ENCODE measurements at regions of chr2 and their contacts with region 1.

Region 1: GRCh38 chr2:54838585-54839035 is 115.1 kb downstream of the EML6 start:
- DNase-seq: peak in 34 of 35 experiments; percentile 4 to 81 (median 46)
- ATAC-seq: peak; percentile 71 to 84 (median 76)
- H3K4me3 ChIP-seq: no peak overlapping the region
- H3K4me3 Mint-ChIP-seq: no peak overlapping the region
- H3K27ac ChIP-seq: no peak overlapping the region
- H3K27ac Mint-ChIP-seq: no peak overlapping the region
- H3K4me1 ChIP-seq: no peaks in the 10 kb centered on the region
- H3K4me1 Mint-ChIP-seq: no peaks in the 10 kb centered on the region
- H3K27me3 ChIP-seq: no peaks in the 10 kb centered on the region
- H3K27me3 Mint-ChIP-seq: no peaks in the 10 kb centered on the region

Region 2: GRCh38 chr2:54106631-54107454 is 731.8 kb before region 1 on chr2:
- CTCF ChIA-PET with region 1: interaction called, 5 to 20 read pairs
- POLR2A ChIA-PET with region 1: no interaction called
- DNase-seq: peak in 31 of 35 experiments; percentile 9 to 73 (median 33)
- ATAC-seq: peak; percentile 50 to 89 (median 65)
- H3K4me3 ChIP-seq: no peak overlapping the region
- H3K4me3 Mint-ChIP-seq: no peak overlapping the region
- H3K27ac ChIP-seq: no peak overlapping the region
- H3K27ac Mint-ChIP-seq: no peak overlapping the region
- H3K4me1 ChIP-seq: peaks cover 0 to 4% of the 10 kb centered on the region in 2 experiments
- H3K4me1 Mint-ChIP-seq: peaks cover 6 to 22% (median 10%) of the 10 kb centered on the region in 3 donors
- H3K27me3 ChIP-seq: no peaks in the 10 kb centered on the region
- H3K27me3 Mint-ChIP-seq: no peaks in the 10 kb centered on the region

Region 3: DNA sequence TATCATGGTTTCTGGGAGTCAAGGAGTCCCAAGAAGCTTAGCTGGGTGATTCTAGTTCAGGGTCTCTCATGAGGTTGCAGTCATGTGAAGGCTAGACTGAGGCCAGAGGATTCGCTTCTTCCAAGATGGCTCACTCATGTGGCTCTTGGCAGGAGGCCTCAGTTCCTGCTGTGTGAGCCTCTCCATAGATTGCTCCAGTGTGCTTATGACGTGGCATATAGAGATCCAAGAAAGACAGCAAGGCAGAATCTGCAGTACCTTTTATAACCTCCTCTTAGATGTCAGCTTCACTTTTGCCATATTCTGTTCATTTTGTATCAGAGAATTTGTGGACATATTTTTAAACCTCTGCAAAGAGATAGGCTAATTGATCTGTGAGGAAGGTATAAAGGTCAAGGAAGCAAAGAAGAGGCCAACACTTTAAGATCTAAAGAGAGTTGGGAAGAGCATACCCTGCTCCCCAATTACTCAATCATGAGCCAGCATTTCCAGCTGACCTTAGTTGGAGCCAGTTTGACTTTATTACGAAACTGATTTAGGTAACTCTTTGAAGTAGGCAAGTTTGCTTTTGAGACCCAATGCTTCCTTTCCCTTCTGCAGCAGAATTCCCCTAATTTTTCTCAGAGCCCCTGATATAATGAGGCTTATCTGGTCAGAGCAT is 19.5 kb after region 1 on chr2:
- CTCF ChIA-PET with region 1: interaction called in 1 of 2 experiments, 12 read pairs
- POLR2A ChIA-PET with region 1: no interaction called
- DNase-seq: no peak
- ATAC-seq: no peak
- H3K4me3 ChIP-seq: no peak overlapping the region
- H3K4me3 Mint-ChIP-seq: no peak overlapping the region
- H3K27ac ChIP-seq: no peak overlapping the region
- H3K27ac Mint-ChIP-seq: no peak overlapping the region
- H3K4me1 ChIP-seq: no peaks in the 10 kb centered on the region
- H3K4me1 Mint-ChIP-seq: no peaks in the 10 kb centered on the region
- H3K27me3 ChIP-seq: no peaks in the 10 kb centered on the region
- H3K27me3 Mint-ChIP-seq: no peaks in the 10 kb centered on the region